PC-3 (cell line): ENCODE measurements at regions of chr11 and their contacts with region 1.

Region 1: DNA sequence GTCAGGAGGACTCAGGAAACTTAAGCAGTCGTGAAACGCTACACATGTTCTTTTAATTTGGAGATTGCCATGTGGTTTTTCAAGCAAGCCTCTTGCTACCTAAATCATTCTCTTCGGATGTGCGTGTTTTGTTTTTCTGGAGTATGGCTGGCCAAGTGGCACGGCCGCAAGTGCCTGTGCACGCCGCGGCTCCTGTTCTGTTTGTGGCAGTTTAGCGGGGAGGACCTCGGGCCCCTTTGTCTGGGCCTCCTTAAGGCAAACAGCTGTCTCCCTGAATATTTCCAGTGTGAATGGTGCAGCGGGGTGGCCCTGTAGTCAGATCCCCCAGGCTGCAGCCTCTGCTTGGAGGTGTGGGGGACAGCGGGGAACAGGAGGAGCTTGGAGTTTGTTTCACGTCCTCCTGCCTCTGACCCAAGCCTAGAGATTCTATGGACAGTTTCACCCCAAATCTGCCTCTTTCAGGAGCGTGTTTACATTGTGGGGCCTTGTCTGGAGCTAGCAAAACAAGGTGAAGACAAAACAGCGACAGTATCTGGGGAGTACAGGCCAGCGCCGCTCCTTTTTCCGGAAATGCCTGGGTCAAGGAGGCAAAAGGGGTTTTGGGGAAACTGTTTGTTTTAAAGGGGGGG is 1.3 kb downstream of the LRP5 start:
- DNase-seq: peak; percentile 33
- ATAC-seq: no peak
- H3K4me3 ChIP-seq: peak overlapping the region; percentile 91
- H3K27ac ChIP-seq: peak overlapping the region; percentile 91
- H3K4me1 ChIP-seq: peaks cover 35% of the 10 kb centered on the region
- H3K27me3 ChIP-seq: no peaks in the 10 kb centered on the region
- CTCF ChIP-seq: no peak

Region 2: DNA sequence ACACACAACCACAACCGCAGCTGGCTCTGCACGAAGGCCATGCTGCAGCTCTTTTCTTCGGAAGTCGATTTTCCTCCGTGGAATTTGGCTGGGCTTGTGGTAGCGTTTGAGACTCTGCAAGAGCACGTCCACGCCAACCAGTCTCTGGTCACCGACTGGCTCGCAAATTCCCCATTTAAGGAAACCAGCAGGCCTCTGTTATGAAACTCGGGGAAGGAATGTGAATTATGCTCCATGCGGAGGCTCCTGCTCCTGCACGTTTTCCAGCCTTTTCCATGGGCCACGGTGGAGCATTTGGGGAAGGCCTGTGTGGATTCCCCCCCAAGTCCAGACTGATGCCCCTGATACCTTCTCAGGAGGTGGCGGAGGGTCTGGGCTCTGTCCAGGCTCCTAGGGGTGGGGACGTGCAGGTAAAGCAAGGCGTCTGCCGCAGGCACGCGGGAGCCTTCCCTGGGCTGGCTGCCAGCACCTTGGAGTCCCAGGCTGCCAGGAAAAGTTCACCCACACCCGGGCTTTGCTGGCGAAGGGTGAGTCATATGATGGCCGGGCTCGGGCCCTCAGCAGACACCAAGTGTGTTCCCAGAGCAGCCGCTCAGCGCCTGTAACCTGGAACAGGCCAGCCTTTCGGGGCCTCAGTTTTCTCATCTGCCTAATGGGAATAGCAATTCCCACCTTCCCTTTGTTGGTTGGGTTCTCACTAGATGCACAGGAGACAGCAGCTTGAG is 40.6 kb after region 1 on chr11:
- CTCF ChIA-PET with region 1: no interaction called
- POLR2A ChIA-PET with region 1: no interaction called
- intact Hi-C with region 1: loop called (anchors 1 kb)
- DNase-seq: peak; percentile 98
- ATAC-seq: peak; percentile 96
- H3K4me3 ChIP-seq: peak overlapping the region; percentile 28; the same call in 1 of the 2 replicates
- H3K27ac ChIP-seq: peak overlapping the region; percentile 87
- H3K4me1 ChIP-seq: peaks cover 29% of the 10 kb centered on the region
- H3K27me3 ChIP-seq: no peaks in the 10 kb centered on the region
- CTCF ChIP-seq: no peak

Region 3: DNA sequence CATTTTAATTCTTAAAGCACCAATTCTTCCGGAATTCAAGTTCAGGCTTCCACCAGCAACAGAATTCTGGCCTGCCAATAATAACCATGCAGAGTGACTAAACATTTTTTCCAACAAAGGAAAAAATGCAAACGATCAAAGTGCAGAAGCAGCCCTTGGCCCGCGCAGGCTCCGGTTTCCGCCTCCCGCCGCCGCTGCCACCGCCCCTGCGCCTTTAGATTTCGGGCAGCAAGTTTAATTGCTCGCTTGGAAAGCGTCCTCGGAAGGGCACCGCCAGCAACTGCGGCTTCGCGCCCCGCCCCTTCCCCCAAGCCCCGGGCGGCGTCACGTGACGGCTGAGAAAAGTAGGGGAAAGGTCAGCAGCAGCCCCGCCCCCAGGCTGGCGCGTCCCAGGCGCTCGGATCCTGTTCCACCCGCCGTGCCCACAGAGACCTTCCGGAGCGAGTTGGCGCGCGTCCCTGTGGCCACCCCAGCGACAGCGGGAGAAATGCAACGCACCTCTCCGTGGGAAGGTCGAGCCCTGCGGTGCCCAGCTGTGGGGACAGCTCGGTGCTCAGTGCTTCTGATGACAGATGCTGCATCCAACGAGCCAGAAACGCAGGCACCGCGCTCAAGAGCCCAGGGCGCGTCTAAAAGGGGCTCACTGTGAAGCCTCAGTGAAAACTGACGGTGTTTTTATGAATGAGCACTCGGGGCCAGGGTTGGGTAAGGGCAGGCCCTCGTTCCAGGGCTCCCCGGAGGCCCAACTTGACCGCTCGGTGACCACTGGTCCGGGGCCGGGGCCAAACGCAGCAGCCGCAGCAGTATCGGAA is 525.6 kb after region 1 on chr11:
- CTCF ChIA-PET with region 1: no interaction called
- POLR2A ChIA-PET with region 1: no interaction called
- intact Hi-C with region 1: no loop called
- DNase-seq: peak; percentile 96
- ATAC-seq: peak; percentile 46
- H3K4me3 ChIP-seq: peak overlapping the region; percentile 78
- H3K27ac ChIP-seq: peak overlapping the region; percentile 77
- H3K4me1 ChIP-seq: peaks cover 36% of the 10 kb centered on the region
- H3K27me3 ChIP-seq: no peaks in the 10 kb centered on the region
- CTCF ChIP-seq: no peak